ENCODE measurements at regions of chr10 and their contacts with region 1.

Region 1: DNA sequence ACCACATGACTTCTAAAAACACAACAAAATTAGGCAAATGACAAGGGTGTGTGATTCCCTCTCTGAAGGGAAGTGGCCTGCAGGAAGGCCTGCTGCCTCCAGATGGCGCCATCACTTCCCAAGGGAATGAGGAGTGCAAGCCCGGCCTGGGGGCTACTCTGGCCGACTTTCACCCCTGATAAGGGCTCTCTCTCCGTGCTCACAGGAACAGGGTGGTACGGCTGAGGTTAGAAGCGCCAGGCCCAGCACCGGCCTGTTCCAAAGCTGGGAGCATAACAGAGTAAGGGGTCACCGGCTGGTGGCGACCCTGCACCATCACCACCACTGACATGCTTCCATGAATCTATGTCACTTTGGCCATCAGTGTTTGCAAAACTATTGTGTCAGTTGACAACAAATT is 13.1 kb downstream of the RBP3 start:
- DNase-seq: peak; percentile 54
- ATAC-seq: no peak
- H3K4me3 Mint-ChIP-seq: no peak overlapping the region
- H3K27ac Mint-ChIP-seq: no peak overlapping the region
- H3K4me1 Mint-ChIP-seq: no peaks in the 10 kb centered on the region
- H3K27me3 Mint-ChIP-seq: no peaks in the 10 kb centered on the region
- CTCF ChIP-seq: peak; percentile 84

Region 2: DNA sequence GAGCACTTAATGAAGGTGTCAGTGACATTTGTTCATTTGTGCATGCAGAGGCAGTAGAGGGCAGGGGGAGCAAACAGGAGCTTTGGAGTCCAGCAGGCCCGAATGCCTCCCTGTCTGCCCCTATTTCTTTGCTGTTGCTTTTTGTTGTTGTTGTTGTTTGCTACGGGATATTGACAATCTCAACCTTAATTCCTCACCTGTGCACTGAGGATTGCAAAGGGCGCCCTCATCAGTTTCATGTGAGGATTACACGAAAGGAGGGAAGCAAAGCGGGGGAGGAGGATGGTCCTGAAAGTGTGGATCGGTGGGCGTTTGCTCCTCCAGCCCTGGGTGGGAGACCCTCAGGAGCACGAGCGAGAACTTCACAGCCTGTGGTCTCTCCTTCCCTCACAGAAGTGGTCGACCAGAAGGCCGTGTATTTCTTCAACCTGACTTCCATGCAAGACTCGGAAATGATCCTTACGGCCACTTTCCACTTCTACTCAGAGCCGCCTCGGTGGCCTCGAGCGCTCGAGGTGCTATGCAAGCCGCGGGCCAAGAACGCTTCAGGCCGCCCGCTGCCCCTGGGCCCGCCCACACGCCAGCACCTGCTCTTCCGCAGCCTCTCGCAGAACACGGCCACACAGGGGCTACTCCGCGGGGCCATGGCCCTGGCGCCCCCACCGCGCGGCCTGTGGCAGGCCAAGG is 51.7 kb before region 1 on chr10:
- CTCF ChIA-PET with region 1: no interaction called
- POLR2A ChIA-PET with region 1: no interaction called
- intact Hi-C with region 1: no loop called
- DNase-seq: peak; percentile 38
- ATAC-seq: no peak
- H3K4me3 Mint-ChIP-seq: no peak overlapping the region
- H3K27ac Mint-ChIP-seq: no peak overlapping the region
- H3K4me1 Mint-ChIP-seq: peaks cover 29% of the 10 kb centered on the region
- H3K27me3 Mint-ChIP-seq: no peaks in the 10 kb centered on the region
- CTCF ChIP-seq: peak; percentile 65

Region 3: GRCh38 chr10:47334466-47335295 is 26.6 kb before region 1 on chr10:
- CTCF ChIA-PET with region 1: no interaction called
- POLR2A ChIA-PET with region 1: no interaction called
- intact Hi-C with region 1: no loop called
- DNase-seq: no peak
- ATAC-seq: no peak
- H3K4me3 Mint-ChIP-seq: no peak overlapping the region
- H3K27ac Mint-ChIP-seq: no peak overlapping the region
- H3K4me1 Mint-ChIP-seq: no peaks in the 10 kb centered on the region
- H3K27me3 Mint-ChIP-seq: no peaks in the 10 kb centered on the region
- CTCF ChIP-seq: no peak

Region 4: DNA sequence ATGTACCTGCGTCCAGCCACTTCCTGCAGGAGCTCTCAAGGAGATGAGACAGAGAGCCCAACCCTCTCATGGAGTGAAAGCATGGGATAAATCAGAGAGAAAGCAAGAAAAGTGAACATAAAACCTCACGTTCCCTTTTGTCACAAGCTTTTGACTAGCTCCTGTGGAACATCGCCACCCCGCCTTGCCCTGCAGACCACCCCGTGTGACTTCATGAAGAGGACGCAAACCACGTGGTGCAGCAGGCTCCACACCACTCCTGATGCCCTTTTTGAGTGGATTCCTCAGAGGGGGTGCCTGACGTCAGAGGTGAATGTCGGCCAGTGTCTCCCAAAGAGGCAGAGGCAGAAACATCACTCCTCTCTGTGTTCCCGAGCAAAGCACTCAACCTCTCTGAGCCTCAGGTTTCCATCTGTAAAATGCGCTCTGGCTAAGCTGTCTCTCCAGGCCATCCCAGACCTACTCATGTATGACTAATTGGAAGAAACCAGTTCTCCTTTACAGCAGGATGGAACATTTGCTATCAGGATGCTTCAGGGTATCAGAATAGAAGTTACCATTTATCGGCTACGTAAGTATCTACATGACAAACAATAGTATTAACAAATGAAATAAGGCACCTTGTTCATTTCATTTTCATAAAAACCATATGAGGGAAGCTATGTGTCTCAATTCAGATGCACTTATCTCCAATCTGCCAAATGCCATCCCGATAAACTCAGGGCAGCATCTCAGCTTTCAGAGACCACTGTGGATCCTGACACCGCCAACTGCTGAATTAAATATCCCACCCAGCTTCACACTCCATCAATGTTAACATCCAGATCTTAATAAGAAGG is 17.5 kb after region 1 on chr10:
- CTCF ChIA-PET with region 1: interaction called, 11 read pairs
- POLR2A ChIA-PET with region 1: no interaction called
- intact Hi-C with region 1: no loop called
- DNase-seq: no peak
- ATAC-seq: no peak
- H3K4me3 Mint-ChIP-seq: no peak overlapping the region
- H3K27ac Mint-ChIP-seq: no peak overlapping the region
- H3K4me1 Mint-ChIP-seq: peaks cover 12% of the 10 kb centered on the region
- H3K27me3 Mint-ChIP-seq: peaks cover 51% of the 10 kb centered on the region
- CTCF ChIP-seq: no peak

Measured in activated CD8-positive, alpha-beta T cell treated with anti-CD3 and anti-CD28 coated beads for 36 hours (primary cell).